ENCODE measurements at regions of chr11 and their contacts with region 1.

Region 1: DNA sequence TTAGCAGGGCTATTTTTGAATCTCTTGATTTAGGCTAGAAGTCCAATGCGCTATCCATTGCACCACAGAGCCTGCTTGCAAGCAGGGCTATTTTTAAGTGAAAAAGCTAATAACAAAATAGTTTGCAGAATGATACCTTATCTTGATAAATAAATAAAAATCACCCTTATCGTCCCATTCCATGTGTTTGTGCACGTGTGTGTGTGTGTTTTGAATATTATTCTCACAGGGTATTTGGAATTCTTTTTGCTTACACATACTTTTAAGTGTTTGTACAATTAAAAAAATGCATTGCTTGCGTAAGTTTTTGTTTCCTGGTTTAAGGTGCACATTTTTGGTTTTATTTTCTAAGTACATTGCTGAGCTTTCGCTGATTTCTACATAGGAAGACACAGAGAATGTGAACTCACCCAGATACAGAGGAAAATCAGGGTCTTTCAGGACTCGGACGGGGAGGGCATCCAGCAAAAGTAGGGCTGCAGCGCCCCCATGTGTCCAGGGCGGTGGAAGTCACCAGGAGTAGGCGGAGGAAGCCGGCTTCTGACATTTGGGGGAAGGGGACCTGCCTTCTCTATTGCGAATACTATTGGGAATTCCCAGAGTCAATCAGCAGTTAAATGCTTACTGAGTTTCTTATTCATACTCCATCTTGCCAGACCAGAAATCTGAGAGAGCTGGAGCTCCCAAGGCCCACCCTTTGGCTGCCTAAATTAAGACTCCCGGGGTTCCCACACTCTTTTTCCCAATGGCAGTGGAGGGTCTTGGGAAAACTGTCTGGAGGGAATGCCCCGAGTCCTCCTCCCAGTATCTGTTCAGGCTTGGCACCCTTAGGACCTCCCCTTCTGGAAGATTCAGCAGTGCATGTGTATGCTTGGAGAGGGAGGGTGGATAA is 27.2 kb downstream of the SLC1A2 start:
- DNase-seq: peak; percentile 54
- H3K4me3 ChIP-seq: no peak overlapping the region
- H3K27ac ChIP-seq: no peak overlapping the region
- H3K4me1 ChIP-seq: peaks cover 14% of the 10 kb centered on the region
- H3K27me3 ChIP-seq: no peaks in the 10 kb centered on the region
- CTCF ChIP-seq: peak; percentile 74 to 90

Region 2: DNA sequence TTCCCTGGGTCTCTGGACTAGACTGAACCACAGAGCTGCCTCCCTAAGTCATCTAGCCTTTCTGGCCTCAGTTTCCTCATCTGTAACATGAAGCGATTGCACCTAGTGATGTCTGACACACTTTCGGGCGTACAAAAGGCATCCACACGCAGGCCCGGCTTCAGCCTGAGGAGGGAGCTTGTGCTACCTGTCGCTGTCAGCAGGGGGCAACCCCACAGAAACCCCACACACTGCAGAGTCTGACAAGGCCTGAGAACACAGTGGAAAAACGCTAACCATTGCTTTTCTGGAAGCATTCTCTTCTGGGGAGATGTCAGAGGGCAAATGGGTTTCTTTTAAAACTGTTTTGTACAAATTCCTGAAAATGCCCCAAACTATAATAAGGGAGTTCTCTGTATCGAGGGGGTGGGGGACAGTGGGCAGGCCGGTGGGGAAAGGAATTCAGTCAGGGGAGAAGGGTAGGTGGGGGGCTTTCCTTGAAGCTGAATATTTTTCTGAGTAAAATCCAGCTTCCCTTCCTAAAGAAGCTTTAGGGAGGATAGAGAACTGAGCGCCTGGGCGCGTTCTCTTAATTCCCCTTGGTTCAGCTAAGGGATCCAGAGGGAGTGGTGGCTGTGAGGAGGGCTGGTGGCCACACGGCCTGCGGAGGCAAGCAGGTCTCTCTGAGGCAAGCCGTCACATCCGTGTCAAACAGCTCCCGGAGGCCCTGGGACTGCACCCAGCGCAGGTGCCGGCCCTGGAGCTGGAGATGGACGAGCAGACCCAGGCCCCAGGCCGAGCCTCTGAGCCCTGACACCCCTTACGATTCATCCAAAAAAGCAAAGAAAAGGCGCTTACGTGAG is 879.1 kb before region 1 on chr11:
- CTCF ChIA-PET with region 1: no interaction called
- dilution Hi-C with region 1: no loop called
- in situ Hi-C with region 1: no loop called
- intact Hi-C with region 1: loop called (anchors 5 kb)
- DNase-seq: peak; percentile 29
- H3K4me3 ChIP-seq: no peak overlapping the region
- H3K27ac ChIP-seq: no peak overlapping the region
- H3K4me1 ChIP-seq: no peaks in the 10 kb centered on the region
- H3K27me3 ChIP-seq: no peaks in the 10 kb centered on the region
- CTCF ChIP-seq: peak; percentile 88 to 92

Region 3: DNA sequence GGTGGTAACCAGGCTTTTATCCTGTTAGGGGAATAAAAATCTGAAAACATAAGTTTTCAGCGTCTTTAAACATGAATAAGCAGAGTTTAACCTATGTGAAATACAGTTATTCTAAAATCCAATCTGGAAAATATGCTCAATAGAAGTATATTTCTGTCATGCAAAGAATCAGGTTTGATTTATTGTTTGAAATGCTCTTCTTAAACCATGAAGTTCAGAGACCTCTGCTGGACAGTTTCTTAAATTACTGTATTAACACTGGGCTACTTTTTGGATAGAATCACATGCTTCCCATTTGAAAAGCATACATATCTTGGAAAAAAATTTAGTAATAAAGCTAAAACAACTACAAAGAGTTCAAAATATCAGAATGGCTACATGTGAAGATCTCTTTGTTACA is 501.4 kb before region 1 on chr11:
- CTCF ChIA-PET with region 1: no interaction called
- dilution Hi-C with region 1: no loop called
- in situ Hi-C with region 1: no loop called
- intact Hi-C with region 1: loop called (anchors 1 kb)
- DNase-seq: peak; percentile 21
- H3K4me3 ChIP-seq: no peak overlapping the region
- H3K27ac ChIP-seq: no peak overlapping the region
- H3K4me1 ChIP-seq: no peaks in the 10 kb centered on the region
- H3K27me3 ChIP-seq: no peaks in the 10 kb centered on the region
- CTCF ChIP-seq: peak; percentile 39 to 54

Region 4: DNA sequence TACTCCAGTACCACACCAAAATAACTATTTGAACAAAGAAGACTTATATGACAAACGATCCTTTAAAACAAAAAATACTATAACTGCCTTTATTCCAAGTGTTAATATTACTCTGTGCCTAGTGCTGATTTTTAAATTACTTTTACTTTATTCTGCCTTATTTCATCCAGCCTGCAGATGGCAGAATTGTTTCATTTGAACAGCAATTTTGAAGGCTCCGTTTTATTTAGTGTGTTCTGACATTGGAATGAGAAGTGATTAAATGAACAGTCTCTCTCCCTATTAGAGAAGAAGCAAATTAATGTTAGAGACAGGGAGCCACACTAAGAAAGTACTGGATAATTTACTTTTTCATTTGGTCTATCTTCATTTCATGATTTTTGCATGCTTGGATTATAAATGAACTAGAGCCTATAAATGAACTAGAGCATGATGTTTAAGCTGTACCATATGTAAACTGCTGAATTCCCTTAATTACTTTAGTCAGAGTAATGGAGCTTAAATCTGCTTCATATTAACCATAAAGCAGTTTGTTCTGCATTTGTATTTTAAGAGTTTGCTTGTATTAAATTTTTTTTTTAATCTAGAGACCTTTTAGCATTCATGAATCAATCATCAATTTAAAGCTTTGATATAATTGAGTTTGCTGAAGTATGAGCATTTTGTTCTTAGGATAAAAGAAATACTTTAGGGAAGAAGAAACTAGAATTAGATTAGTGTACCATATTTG is 465.9 kb before region 1 on chr11:
- CTCF ChIA-PET with region 1: interaction called, 5 read pairs
- dilution Hi-C with region 1: loop called (anchors 25 kb)
- in situ Hi-C with region 1: loop called (anchors 10 to 25 kb)
- intact Hi-C with region 1: loop called (anchors 1 kb)
- DNase-seq: peak; percentile 36
- H3K4me3 ChIP-seq: no peak overlapping the region
- H3K27ac ChIP-seq: no peak overlapping the region
- H3K4me1 ChIP-seq: peaks cover 4% of the 10 kb centered on the region
- H3K27me3 ChIP-seq: no peaks in the 10 kb centered on the region
- CTCF ChIP-seq: peak; percentile 63 to 66

Region 5: DNA sequence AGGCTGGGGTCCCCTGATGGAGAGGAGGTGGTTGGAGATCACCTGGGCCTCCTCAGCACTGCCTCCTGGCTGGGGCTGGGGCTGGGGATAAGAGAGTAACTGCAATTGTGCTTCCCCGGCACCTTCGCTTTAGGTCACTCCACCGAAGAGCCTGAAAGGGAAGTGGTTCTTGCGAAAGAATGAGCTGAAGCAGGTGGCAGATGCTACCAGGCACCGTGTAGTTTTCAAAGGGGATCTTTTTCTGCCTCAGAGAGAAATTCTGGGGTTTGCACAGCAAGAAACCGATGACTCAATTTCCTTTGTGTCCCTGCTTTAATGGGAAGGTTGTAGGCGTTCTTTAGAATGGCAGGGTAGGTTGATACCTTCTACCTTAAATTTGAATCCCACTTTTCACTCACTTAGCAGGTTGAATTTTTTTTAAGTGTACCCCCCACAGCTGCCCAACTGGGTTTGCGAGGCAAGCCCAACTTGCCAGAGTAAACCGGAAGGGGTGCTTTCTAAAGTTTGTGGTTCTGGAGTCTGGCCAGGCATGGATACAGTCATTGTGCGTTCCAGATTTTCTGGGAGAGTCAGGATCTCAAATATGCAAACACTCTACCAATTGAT is 247.9 kb before region 1 on chr11:
- CTCF ChIA-PET with region 1: no interaction called
- dilution Hi-C with region 1: no loop called
- in situ Hi-C with region 1: no loop called
- intact Hi-C with region 1: loop called (anchors 10 kb)
- DNase-seq: peak; percentile 87
- H3K4me3 ChIP-seq: peak overlapping the region; percentile 36 to 98 (median 88)
- H3K27ac ChIP-seq: peak overlapping the region; percentile 95
- H3K4me1 ChIP-seq: peaks cover 52% of the 10 kb centered on the region
- H3K27me3 ChIP-seq: no peaks in the 10 kb centered on the region
- CTCF ChIP-seq: peak in 1 of 2 donors; percentile 9

Region 6: DNA sequence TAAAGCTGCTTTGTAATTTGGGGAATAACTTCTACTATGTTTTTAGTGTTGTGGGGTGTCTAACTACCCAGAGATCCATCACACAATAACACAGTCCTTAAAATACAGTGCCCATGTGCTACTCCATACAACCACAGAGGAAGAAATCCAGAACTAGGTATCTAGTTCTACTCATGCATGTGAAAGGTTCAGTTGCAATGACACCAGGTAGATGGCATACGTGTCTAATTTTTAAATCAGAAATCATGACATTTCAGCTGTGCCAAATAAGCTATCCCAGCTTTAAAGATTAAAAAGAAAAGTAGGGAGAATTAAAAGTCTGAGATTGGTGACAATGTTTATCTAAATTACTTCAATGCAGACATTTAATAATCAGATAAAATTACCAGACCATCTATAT is 131.0 kb before region 1 on chr11:
- CTCF ChIA-PET with region 1: no interaction called
- dilution Hi-C with region 1: loop called (anchors 25 kb)
- in situ Hi-C with region 1: no loop called
- intact Hi-C with region 1: loop called (anchors 1 kb)
- DNase-seq: no peak
- H3K4me3 ChIP-seq: no peak overlapping the region
- H3K27ac ChIP-seq: no peak overlapping the region
- H3K4me1 ChIP-seq: no peaks in the 10 kb centered on the region
- H3K27me3 ChIP-seq: no peaks in the 10 kb centered on the region
- CTCF ChIP-seq: peak in 1 of 2 donors; percentile 26

Region 7: DNA sequence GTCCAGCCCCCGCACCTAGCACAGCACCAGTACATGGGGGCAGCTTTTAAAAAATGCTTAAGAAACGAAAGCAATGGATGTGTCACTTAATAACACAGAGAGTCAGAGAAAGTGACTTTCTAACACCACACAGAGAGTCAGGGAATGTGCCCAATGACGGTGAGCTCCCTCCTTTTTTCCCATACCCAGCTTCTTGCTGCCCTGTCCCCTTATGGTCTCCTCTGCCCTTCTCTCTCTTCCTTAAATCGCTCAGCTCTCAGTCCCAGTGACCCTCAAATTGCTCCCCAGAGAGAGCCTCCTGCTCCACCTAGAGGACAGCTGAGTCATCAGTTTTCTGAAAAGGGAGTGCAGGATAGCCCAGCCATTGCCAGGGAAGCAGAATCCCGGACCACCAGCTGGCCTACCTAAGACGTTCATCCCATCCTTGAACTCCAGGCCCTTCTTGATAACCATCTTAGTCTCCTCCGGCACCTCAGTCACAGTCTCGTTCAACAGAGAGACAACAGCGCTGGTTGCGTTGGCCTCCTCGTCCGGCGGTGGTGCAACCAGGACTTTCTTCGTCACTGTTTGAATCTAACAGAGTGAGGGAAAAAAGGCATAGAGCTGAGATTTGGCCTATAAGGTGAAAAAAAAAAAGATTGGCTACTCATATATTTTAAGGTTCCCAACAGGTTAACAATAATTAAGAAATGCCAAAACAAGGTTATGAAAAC is 86.3 kb before region 1 on chr11:
- CTCF ChIA-PET with region 1: no interaction called
- dilution Hi-C with region 1: no loop called
- in situ Hi-C with region 1: no loop called
- intact Hi-C with region 1: loop called (anchors 5 kb)
- DNase-seq: no peak
- H3K4me3 ChIP-seq: no peak overlapping the region
- H3K27ac ChIP-seq: no peak overlapping the region
- H3K4me1 ChIP-seq: no peaks in the 10 kb centered on the region
- H3K27me3 ChIP-seq: no peaks in the 10 kb centered on the region
- CTCF ChIP-seq: peak; percentile 25 to 67